Activated CD4-positive, alpha-beta memory T cell treated with anti-CD3 and anti-CD28 coated beads, Interleukin-2, amount 10 ng/mL, durations not matched to agents 7 days and 5 days (primary cell): ENCODE measurements at regions of chr22 and their contacts with region 1.

Region 1: GRCh38 chr22:38700270-38700788 is 414 bp downstream of the JOSD1 start:
- DNase-seq: no peak
- H3K4me3 Mint-ChIP-seq: peak overlapping the region; percentile 96
- H3K27ac Mint-ChIP-seq: peak overlapping the region; percentile 99
- H3K4me1 Mint-ChIP-seq: peaks cover 62% of the 10 kb centered on the region
- H3K27me3 Mint-ChIP-seq: no peaks in the 10 kb centered on the region

Region 2: GRCh38 chr22:38564669-38565068 is 135.7 kb before region 1 on chr22:
- CTCF ChIA-PET with region 1: no interaction called
- POLR2A ChIA-PET with region 1: no interaction called
- DNase-seq: no peak
- H3K4me3 Mint-ChIP-seq: no peak overlapping the region
- H3K27ac Mint-ChIP-seq: no peak overlapping the region
- H3K4me1 Mint-ChIP-seq: peaks cover 6% of the 10 kb centered on the region
- H3K27me3 Mint-ChIP-seq: no peaks in the 10 kb centered on the region

Region 3: GRCh38 chr22:38681784-38682335 is 18.5 kb before region 1 on chr22 and contains the start of gene TOMM22:
- CTCF ChIA-PET with region 1: interaction called, 17 read pairs
- POLR2A ChIA-PET with region 1: interaction called, 139 read pairs
- DNase-seq: peak; percentile 85
- H3K4me3 Mint-ChIP-seq: peak within 1 kb of the TSS; percentile 100
- H3K27ac Mint-ChIP-seq: peak within 1 kb of the TSS; percentile 95
- H3K4me1 Mint-ChIP-seq: peaks cover 25% of the 10 kb centered on the region
- H3K27me3 Mint-ChIP-seq: no peaks in the 10 kb centered on the region
- total RNA-seq, gene TOMM22: 60.4 to 63.0 TPM

Region 4: DNA sequence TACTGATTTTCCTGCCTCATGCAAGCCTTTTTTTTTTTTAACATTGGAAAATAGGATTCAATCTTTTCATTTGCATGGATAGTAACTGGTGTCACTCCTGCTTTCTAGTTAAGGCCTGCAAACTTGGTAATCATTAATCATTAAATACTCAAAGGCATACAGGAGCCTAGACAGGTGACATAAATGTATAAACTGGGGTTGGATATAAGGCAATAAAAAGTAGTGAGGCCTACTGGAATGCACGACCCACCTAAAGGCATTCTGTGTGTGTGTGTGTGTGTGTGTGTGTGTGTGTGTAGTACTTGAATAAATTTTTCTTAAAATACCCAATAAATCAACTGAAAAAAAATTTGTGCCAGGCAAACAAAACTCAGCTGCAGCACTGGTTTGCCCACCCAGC is 10.7 kb before region 1 on chr22:
- CTCF ChIA-PET with region 1: interaction called, 3 read pairs
- POLR2A ChIA-PET with region 1: interaction called, 139 read pairs
- DNase-seq: no peak
- H3K4me3 Mint-ChIP-seq: no peak overlapping the region
- H3K27ac Mint-ChIP-seq: no peak overlapping the region
- H3K4me1 Mint-ChIP-seq: peaks cover 22% of the 10 kb centered on the region
- H3K27me3 Mint-ChIP-seq: no peaks in the 10 kb centered on the region